Breast epithelium (tissue), 4 donors: ENCODE measurements at regions of chr20 and their contacts with region 1.

Region 1: GRCh38 chr20:7585126-7585679 is 355.1 kb downstream of the HAO1 start:
- DNase-seq: no peak
- H3K4me3 ChIP-seq: no peak overlapping the region
- H3K27ac ChIP-seq: no peak overlapping the region
- H3K4me1 ChIP-seq: no peaks in the 10 kb centered on the region
- H3K27me3 ChIP-seq: no peaks in the 10 kb centered on the region
- CTCF ChIP-seq: no peak
- POLR2A ChIP-seq: no peak

Region 2: GRCh38 chr20:7617797-7618196 is 32.6 kb after region 1 on chr20:
- intact Hi-C with region 1: loop called (anchors 2 kb)
- DNase-seq: no peak
- H3K4me3 ChIP-seq: no peak overlapping the region
- H3K27ac ChIP-seq: no peak overlapping the region
- H3K4me1 ChIP-seq: no peaks in the 10 kb centered on the region
- H3K27me3 ChIP-seq: no peaks in the 10 kb centered on the region
- CTCF ChIP-seq: no peak
- POLR2A ChIP-seq: no peak